AG04450 (cell line): ENCODE measurements at regions of chr18 and their contacts with region 1.

Region 1: GRCh38 chr18:3321133-3321812 is 59.3 kb downstream of the MYL12B start:
- DNase-seq: no peak
- H3K4me3 ChIP-seq: no peak overlapping the region
- H3K27ac ChIP-seq: no peak overlapping the region
- H3K27me3 ChIP-seq: no peaks in the 10 kb centered on the region
- CTCF ChIP-seq: no peak

Region 2: DNA sequence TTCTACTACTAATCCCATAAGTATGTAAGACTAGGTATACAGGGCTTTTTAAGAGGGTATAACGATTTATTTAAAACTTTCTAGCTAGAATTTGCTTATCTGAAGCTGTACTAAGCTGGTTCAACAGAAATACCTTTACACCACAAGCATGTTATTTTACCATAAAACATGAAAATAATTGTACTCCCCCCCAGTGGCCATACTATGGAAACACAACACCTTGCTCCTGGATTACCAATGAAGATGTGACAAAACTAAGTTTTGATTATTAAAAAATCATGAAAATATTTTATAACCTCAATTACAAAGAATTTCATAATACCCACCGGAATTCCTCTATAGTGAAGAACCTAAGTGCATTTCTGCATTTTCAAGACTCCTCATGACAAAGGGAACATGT is 335.6 kb before region 1 on chr18:
- CTCF ChIA-PET with region 1: no interaction called
- POLR2A ChIA-PET with region 1: interaction called, 15 read pairs
- DNase-seq: no peak
- H3K4me3 ChIP-seq: no peak overlapping the region
- H3K27ac ChIP-seq: no peak overlapping the region
- H3K27me3 ChIP-seq: no peaks in the 10 kb centered on the region
- CTCF ChIP-seq: peak; percentile 46

Region 3: DNA sequence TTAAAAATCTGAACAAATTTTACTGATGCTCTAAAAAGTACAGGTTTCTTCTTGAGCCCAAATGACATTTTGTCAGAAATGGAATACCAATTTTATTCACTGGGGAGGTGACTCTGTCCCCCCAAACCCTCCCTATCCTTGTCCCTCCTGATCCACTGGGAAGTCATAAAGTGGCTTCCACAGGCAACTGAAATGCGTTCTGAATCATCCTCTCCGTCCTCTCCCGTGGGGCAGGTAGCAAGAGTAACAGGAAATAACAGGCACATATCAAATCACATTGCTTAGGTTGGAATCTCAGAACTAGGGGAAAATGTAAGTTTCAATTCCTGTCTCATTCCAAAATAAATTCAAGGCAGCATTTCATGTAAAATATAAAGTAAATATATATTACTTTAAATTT is 14.9 kb before region 1 on chr18:
- CTCF ChIA-PET with region 1: interaction called, 15 read pairs
- POLR2A ChIA-PET with region 1: no interaction called
- DNase-seq: no peak
- H3K4me3 ChIP-seq: no peak overlapping the region
- H3K27ac ChIP-seq: no peak overlapping the region
- H3K27me3 ChIP-seq: no peaks in the 10 kb centered on the region
- CTCF ChIP-seq: no peak